Upper lobe of right lung (tissue), 1 donor: ENCODE measurements at regions of chr17 and their contacts with region 1.

Region 1: DNA sequence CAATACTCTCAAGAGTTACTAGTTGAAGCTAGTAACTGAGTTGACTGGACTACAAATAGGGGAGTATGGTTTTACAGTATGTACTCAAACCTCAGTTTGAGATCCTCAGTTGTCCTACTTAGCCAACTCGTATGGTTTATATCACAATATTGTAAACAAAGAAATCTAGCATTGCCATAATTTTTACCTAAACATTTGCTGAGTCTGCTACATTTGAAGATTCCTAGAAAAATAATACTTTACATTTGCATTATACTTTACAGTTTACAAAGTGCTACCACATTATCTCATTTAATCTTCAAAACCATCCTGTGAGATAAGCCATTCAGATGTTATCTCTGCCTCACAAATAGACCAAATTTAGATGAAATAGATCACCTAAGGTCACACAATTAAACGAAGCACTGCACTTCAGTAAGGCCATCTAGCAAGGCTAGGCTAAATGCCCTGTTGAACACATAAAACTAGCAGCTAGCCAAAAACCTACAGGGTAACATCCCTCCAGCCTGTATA is 16.3 kb downstream of the CBX1 start:
- DNase-seq: no peak
- ATAC-seq: no peak
- H3K4me3 ChIP-seq: no peak overlapping the region
- H3K27ac ChIP-seq: no peak overlapping the region
- H3K4me1 ChIP-seq: no peaks in the 10 kb centered on the region
- H3K27me3 ChIP-seq: no peaks in the 10 kb centered on the region
- CTCF ChIP-seq: no peak

Region 2: GRCh38 chr17:48131216-48131824 is 46.3 kb after region 1 on chr17:
- intact Hi-C with region 1: loop called (anchors 10 kb)
- DNase-seq: no peak
- ATAC-seq: peak; percentile 96
- H3K4me3 ChIP-seq: no peak overlapping the region
- H3K27ac ChIP-seq: no peak overlapping the region
- H3K4me1 ChIP-seq: no peaks in the 10 kb centered on the region
- H3K27me3 ChIP-seq: no peaks in the 10 kb centered on the region
- CTCF ChIP-seq: peak; percentile 84

Region 3: GRCh38 chr17:48153691-48154358 is 68.8 kb after region 1 on chr17:
- intact Hi-C with region 1: no loop called
- DNase-seq: no peak
- ATAC-seq: peak; percentile 54
- H3K4me3 ChIP-seq: no peak overlapping the region
- H3K27ac ChIP-seq: no peak overlapping the region
- H3K4me1 ChIP-seq: no peaks in the 10 kb centered on the region
- H3K27me3 ChIP-seq: peaks cover 33% of the 10 kb centered on the region
- CTCF ChIP-seq: peak; percentile 30